ENCODE measurements at regions of chr3 and their contacts with region 1.

Region 1: DNA sequence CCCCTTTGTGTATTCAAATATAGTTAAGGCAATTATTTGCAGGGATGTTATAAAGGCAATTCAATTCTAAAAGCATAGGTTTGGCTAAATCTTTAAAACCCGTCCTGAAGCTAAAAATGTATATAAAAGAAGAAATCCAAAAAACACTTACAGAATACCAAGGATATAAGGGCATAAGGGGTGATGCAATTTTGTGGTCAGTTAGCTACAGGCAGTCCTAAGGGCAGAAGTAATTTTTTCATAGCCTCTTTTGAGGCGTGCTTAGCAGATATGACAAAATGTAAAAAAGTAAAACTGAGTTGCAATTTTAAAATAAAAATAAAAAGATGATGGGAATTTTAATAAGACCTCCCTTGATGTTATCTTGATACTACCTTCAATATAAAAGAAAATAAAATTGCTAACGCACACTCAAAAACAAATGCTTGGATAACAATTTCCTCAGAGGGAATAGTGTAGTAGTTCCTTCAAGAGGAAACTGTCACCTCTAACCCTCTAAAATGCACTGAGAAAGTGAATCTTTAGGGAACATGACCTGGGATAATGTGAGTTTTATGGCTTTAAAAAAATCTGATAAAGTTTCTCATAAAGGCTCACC is 104.2 kb downstream of the MYH15 start:
- DNase-seq: no peak
- H3K4me3 ChIP-seq: no peak overlapping the region
- H3K4me3 Mint-ChIP-seq: no peak overlapping the region
- H3K27ac ChIP-seq: no peak overlapping the region
- H3K27ac Mint-ChIP-seq: no peak overlapping the region
- H3K4me1 ChIP-seq: no peaks in the 10 kb centered on the region
- H3K4me1 Mint-ChIP-seq: peaks cover 0 to 6% (median 5%) of the 10 kb centered on the region in 3 donors
- H3K27me3 ChIP-seq: no peaks in the 10 kb centered on the region
- H3K27me3 Mint-ChIP-seq: no peaks in the 10 kb centered on the region

Region 2: GRCh38 chr3:108153451-108153981 is 252.6 kb before region 1 on chr3:
- CTCF ChIA-PET with region 1: interaction called, 10 read pairs
- POLR2A ChIA-PET with region 1: no interaction called
- DNase-seq: peak; percentile 8 to 53 (median 24)
- H3K4me3 ChIP-seq: no peak overlapping the region
- H3K4me3 Mint-ChIP-seq: no peak overlapping the region
- H3K27ac ChIP-seq: no peak overlapping the region
- H3K27ac Mint-ChIP-seq: peak overlapping the region in 1 of 8 donors; percentile 74
- H3K4me1 ChIP-seq: no peaks in the 10 kb centered on the region
- H3K4me1 Mint-ChIP-seq: peaks cover 4 to 7% (median 5%) of the 10 kb centered on the region in 3 donors
- H3K27me3 ChIP-seq: no peaks in the 10 kb centered on the region
- H3K27me3 Mint-ChIP-seq: no peaks in the 10 kb centered on the region

Region 3: GRCh38 chr3:108528459-108529252 is 122.5 kb after region 1 on chr3:
- CTCF ChIA-PET with region 1: no interaction called
- POLR2A ChIA-PET with region 1: no interaction called
- DNase-seq: no peak
- H3K4me3 ChIP-seq: no peak overlapping the region
- H3K4me3 Mint-ChIP-seq: no peak overlapping the region
- H3K27ac ChIP-seq: no peak overlapping the region
- H3K27ac Mint-ChIP-seq: no peak overlapping the region
- H3K4me1 ChIP-seq: no peaks in the 10 kb centered on the region
- H3K4me1 Mint-ChIP-seq: no peaks in the 10 kb centered on the region
- H3K27me3 ChIP-seq: no peaks in the 10 kb centered on the region
- H3K27me3 Mint-ChIP-seq: peaks cover 11 to 34% of the 10 kb centered on the region in 2 donors

Measured in CD8-positive, alpha-beta memory T cell (primary cell).